CD4-positive, alpha-beta memory T cell (primary cell): ENCODE measurements at regions of chrX and their contacts with region 1.

Region 1: DNA sequence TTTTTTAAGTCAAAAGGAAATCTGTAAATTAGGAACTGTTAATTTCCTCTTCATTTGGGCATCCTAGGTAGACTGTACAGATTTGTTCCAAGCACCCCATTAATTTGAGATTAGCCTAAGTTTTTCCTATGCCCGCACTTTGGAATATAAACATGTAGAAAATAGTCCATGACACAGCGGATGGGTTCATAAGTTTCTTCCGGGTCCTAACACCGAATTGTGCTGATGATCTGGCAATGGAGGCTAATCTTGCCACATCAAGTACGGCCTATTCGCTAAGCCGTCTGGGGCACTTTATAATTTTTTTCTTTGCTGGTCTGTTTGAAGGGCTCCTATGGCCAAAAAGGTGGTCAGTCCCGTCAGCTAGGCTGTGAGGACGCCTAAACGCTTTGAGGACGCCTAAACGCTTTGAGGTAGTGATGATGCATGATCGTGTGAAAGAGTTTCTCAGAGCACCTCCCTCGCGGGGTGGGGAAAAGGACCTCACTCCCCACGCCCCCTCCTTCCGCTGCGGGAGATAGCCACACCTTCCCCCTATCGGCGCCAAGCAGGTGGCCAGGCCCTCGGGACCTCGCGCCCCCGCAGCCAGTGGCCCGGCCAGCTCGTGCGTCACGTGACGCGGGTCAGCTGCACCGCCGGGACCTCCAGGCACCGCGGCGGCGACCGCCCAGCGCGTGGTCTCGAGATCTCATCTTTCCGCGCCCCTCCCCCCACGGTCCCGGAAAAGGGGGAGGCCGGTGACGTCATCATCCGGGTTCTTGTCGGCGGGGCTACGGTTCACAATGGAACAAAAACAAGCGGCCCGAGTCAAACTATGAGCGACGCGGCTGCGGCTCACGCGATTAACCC is 977 bp upstream of the USP9X start:
- DNase-seq: peak; percentile 95 to 100 (median 99)
- H3K4me3 ChIP-seq: peak overlapping the region; percentile 81 to 91
- H3K4me3 Mint-ChIP-seq: peak overlapping the region; percentile 88 to 99 (median 97)
- H3K27ac ChIP-seq: peak overlapping the region; percentile 95
- H3K27ac Mint-ChIP-seq: peak overlapping the region; percentile 97 to 100 (median 100)
- H3K4me1 ChIP-seq: peaks cover 19% of the 10 kb centered on the region
- H3K4me1 Mint-ChIP-seq: peaks cover 10 to 37% (median 31%) of the 10 kb centered on the region in 4 donors
- H3K27me3 ChIP-seq: no peaks in the 10 kb centered on the region
- H3K27me3 Mint-ChIP-seq: peaks cover 0 to 1% of the 10 kb centered on the region in 2 donors

Region 2: DNA sequence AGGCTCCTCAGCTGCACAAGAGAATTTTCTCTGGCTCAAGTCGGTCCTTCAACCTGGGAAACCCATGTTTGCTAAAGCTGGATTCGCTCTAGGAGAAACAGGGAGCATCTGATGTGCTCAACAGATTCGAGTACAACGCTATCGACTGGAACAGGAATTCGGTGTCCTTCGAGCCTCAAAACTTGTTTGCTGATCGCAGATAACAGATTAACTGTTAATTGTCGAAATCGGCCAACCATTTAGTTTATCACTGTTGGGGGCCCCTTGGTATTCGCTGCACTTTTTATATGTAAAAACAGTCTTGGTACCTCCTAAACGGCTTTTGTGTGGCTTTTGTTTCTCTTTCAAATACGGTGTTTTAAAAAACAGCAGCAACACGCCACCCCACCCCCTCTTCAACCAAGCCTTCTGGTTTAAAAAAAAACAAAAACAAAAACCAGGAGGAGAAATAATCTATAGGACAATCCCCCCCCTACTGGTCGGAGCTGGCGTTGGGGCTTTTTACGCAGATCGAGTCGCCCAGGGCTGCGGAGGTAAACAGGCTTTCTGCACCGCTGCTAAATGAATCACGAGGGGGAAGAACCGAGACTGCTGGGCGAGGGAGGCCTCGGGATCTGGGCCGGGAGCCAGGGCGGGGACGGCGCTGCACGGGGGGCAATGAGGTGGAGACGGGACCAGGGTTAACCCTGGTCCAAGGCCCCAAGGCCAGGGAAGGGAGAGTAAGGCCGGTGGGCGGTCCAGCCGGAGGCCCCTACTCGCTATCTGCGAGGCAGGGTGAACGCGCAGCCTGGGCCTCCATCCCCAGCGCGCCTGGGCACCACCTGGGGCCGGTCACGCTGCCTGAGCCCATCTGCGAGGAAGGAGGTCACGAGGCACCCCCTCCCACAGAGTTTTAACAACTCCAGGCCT is 914.8 kb before region 1 on chrX:
- CTCF ChIA-PET with region 1: no interaction called
- POLR2A ChIA-PET with region 1: no interaction called
- intact Hi-C with region 1: loop called (anchors 10 kb)
- DNase-seq: peak; percentile 74 to 87 (median 80)
- H3K4me3 ChIP-seq: peak overlapping the region in 1 of 2 donors; percentile 49
- H3K4me3 Mint-ChIP-seq: peak overlapping the region; percentile 76 to 94 (median 86)
- H3K27ac ChIP-seq: peak overlapping the region; percentile 84
- H3K27ac Mint-ChIP-seq: peak overlapping the region; percentile 93 to 99 (median 98)
- H3K4me1 ChIP-seq: peaks cover 50% of the 10 kb centered on the region
- H3K4me1 Mint-ChIP-seq: peaks cover 18 to 64% (median 41%) of the 10 kb centered on the region in 4 donors
- H3K27me3 ChIP-seq: no peaks in the 10 kb centered on the region
- H3K27me3 Mint-ChIP-seq: no peaks in the 10 kb centered on the region

Region 3: GRCh38 chrX:40647307-40648197 is 436.7 kb before region 1 on chrX and contains the start of gene CXorf38:
- CTCF ChIA-PET with region 1: interaction called, 4 read pairs
- POLR2A ChIA-PET with region 1: interaction called, 9 read pairs
- intact Hi-C with region 1: loop called (anchors 1 kb)
- DNase-seq: peak; percentile 92 to 98 (median 96)
- H3K4me3 ChIP-seq: peak within 1 kb of the TSS; percentile 57 to 66
- H3K4me3 Mint-ChIP-seq: peak within 1 kb of the TSS; percentile 92 to 99 (median 97)
- H3K27ac ChIP-seq: peak within 1 kb of the TSS; percentile 84
- H3K27ac Mint-ChIP-seq: peak within 1 kb of the TSS; percentile 93 to 99 (median 98)
- H3K4me1 ChIP-seq: peaks cover 34% of the 10 kb centered on the region
- H3K4me1 Mint-ChIP-seq: peaks cover 18 to 55% (median 29%) of the 10 kb centered on the region in 4 donors
- H3K27me3 ChIP-seq: no peaks in the 10 kb centered on the region
- H3K27me3 Mint-ChIP-seq: no peaks in the 10 kb centered on the region
- total RNA-seq, gene CXorf38: 25.7 to 26.7 TPM

Region 4: GRCh38 chrX:40877887-40878286 is 206.4 kb before region 1 on chrX:
- CTCF ChIA-PET with region 1: no interaction called
- POLR2A ChIA-PET with region 1: interaction called, 7 read pairs
- intact Hi-C with region 1: loop called (anchors 1 kb)
- DNase-seq: peak; percentile 32 to 43 (median 40)
- H3K4me3 ChIP-seq: no peak overlapping the region
- H3K4me3 Mint-ChIP-seq: peak overlapping the region in 1 of 8 donors; percentile 3
- H3K27ac ChIP-seq: no peak overlapping the region
- H3K27ac Mint-ChIP-seq: no peak overlapping the region
- H3K4me1 ChIP-seq: peaks cover 4% of the 10 kb centered on the region
- H3K4me1 Mint-ChIP-seq: peaks cover 0 to 4% (median 0%) of the 10 kb centered on the region in 4 donors
- H3K27me3 ChIP-seq: no peaks in the 10 kb centered on the region
- H3K27me3 Mint-ChIP-seq: no peaks in the 10 kb centered on the region

Region 5: GRCh38 chrX:41010188-41010846 is 74.0 kb before region 1 on chrX:
- CTCF ChIA-PET with region 1: interaction called, 8 read pairs
- POLR2A ChIA-PET with region 1: interaction called, 29 read pairs
- intact Hi-C with region 1: loop called (anchors 1 kb)
- DNase-seq: peak; percentile 51 to 73 (median 59)
- H3K4me3 ChIP-seq: peak overlapping the region; percentile 34 to 66
- H3K4me3 Mint-ChIP-seq: peak overlapping the region; percentile 66 to 83 (median 81)
- H3K27ac ChIP-seq: peak overlapping the region; percentile 20
- H3K27ac Mint-ChIP-seq: peak overlapping the region; percentile 62 to 92 (median 86)
- H3K4me1 ChIP-seq: peaks cover 13% of the 10 kb centered on the region
- H3K4me1 Mint-ChIP-seq: peaks cover 9 to 15% (median 12%) of the 10 kb centered on the region in 4 donors
- H3K27me3 ChIP-seq: no peaks in the 10 kb centered on the region
- H3K27me3 Mint-ChIP-seq: no peaks in the 10 kb centered on the region

Region 6: DNA sequence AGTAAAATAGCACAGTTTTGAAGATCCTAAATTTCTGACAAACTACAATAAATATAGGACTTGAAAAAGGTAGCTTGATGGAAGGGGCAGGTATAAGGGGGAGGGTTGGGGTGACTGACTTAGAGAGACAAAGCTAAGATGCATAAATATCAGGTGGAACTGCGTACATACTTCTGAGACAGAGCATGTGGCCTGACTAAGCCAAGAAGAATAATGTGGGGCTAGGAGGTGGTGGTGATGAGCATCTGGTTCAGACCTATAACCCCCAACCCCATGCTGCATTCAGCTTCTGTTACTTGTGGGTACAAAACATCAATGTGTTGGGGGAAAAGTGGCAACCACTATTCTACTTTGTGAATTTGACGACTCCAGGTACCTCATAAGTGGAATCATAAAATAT is 20.7 kb after region 1 on chrX:
- CTCF ChIA-PET with region 1: no interaction called
- POLR2A ChIA-PET with region 1: interaction called, 37 read pairs
- intact Hi-C with region 1: no loop called
- DNase-seq: no peak
- H3K4me3 ChIP-seq: no peak overlapping the region
- H3K4me3 Mint-ChIP-seq: peak overlapping the region in 2 of 8 donors; percentile 32 to 33
- H3K27ac ChIP-seq: no peak overlapping the region
- H3K27ac Mint-ChIP-seq: peak overlapping the region in 4 of 7 donors; percentile 22 to 65 (median 34)
- H3K4me1 ChIP-seq: peaks cover 62% of the 10 kb centered on the region
- H3K4me1 Mint-ChIP-seq: peaks cover 43 to 71% (median 57%) of the 10 kb centered on the region in 4 donors
- H3K27me3 ChIP-seq: no peaks in the 10 kb centered on the region
- H3K27me3 Mint-ChIP-seq: no peaks in the 10 kb centered on the region

Region 7: GRCh38 chrX:41116948-41117347 is 32.7 kb after region 1 on chrX:
- CTCF ChIA-PET with region 1: interaction called, 12 read pairs
- POLR2A ChIA-PET with region 1: interaction called, 42 read pairs
- intact Hi-C with region 1: loop called (anchors 1 kb)
- DNase-seq: peak; percentile 44 to 57 (median 50)
- H3K4me3 ChIP-seq: no peak overlapping the region
- H3K4me3 Mint-ChIP-seq: peak overlapping the region; percentile 46 to 80 (median 62)
- H3K27ac ChIP-seq: peak overlapping the region; percentile 26
- H3K27ac Mint-ChIP-seq: peak overlapping the region; percentile 2 to 90 (median 59)
- H3K4me1 ChIP-seq: peaks cover 82% of the 10 kb centered on the region
- H3K4me1 Mint-ChIP-seq: peaks cover 45 to 81% (median 63%) of the 10 kb centered on the region in 4 donors
- H3K27me3 ChIP-seq: no peaks in the 10 kb centered on the region
- H3K27me3 Mint-ChIP-seq: no peaks in the 10 kb centered on the region

Region 8: GRCh38 chrX:41518841-41519220 is 434.6 kb after region 1 on chrX:
- CTCF ChIA-PET with region 1: no interaction called
- POLR2A ChIA-PET with region 1: no interaction called
- intact Hi-C with region 1: no loop called
- DNase-seq: no peak
- H3K4me3 ChIP-seq: no peak overlapping the region
- H3K4me3 Mint-ChIP-seq: no peak overlapping the region
- H3K27ac ChIP-seq: no peak overlapping the region
- H3K27ac Mint-ChIP-seq: peak overlapping the region in 6 of 7 donors; percentile 0 to 89 (median 31)
- H3K4me1 ChIP-seq: peaks cover 14% of the 10 kb centered on the region
- H3K4me1 Mint-ChIP-seq: peaks cover 14 to 34% (median 25%) of the 10 kb centered on the region in 4 donors
- H3K27me3 ChIP-seq: no peaks in the 10 kb centered on the region
- H3K27me3 Mint-ChIP-seq: no peaks in the 10 kb centered on the region